ENCODE measurements at regions of chr3 and their contacts with region 1.

Region 1: GRCh38 chr3:81816473-81817250 is 55.2 kb upstream of the GBE1 start:
- DNase-seq: peak; percentile 61
- CTCF ChIP-seq: no peak

Region 2: GRCh38 chr3:81753416-81754027 is 63.1 kb before region 1 on chr3:
- CTCF ChIA-PET with region 1: no interaction called
- POLR2A ChIA-PET with region 1: no interaction called
- DNase-seq: no peak
- CTCF ChIP-seq: no peak

Region 3: GRCh38 chr3:81799403-81799802 is 17.3 kb before region 1 on chr3:
- CTCF ChIA-PET with region 1: interaction called, 14 read pairs
- POLR2A ChIA-PET with region 1: no interaction called
- DNase-seq: no peak
- CTCF ChIP-seq: no peak

Region 4: DNA sequence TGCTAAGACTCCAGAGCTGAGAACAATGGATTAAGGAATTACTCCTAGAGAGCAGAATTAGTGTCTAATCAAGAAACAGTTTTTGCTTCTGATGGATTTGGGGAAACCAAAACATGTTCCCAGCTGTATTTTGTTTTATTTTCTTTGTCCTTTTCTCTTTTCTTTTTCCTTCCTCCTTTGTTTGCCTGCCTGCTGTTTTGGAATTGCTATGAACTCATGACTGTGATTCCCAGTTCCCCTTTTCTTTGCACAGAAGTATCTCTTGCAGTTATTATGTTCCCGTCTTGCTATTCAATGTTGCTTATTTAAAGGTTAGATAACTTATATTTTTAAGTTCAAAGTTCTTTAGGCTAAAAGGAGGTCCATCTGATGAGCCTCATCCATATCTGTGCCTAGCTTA is 21.8 kb after region 1 on chr3:
- CTCF ChIA-PET with region 1: interaction called, 12 read pairs
- POLR2A ChIA-PET with region 1: no interaction called
- DNase-seq: no peak
- CTCF ChIP-seq: no peak